Mammary epithelial cell (primary cell): ENCODE measurements at regions of chr14 and their contacts with region 1.

Region 1: DNA sequence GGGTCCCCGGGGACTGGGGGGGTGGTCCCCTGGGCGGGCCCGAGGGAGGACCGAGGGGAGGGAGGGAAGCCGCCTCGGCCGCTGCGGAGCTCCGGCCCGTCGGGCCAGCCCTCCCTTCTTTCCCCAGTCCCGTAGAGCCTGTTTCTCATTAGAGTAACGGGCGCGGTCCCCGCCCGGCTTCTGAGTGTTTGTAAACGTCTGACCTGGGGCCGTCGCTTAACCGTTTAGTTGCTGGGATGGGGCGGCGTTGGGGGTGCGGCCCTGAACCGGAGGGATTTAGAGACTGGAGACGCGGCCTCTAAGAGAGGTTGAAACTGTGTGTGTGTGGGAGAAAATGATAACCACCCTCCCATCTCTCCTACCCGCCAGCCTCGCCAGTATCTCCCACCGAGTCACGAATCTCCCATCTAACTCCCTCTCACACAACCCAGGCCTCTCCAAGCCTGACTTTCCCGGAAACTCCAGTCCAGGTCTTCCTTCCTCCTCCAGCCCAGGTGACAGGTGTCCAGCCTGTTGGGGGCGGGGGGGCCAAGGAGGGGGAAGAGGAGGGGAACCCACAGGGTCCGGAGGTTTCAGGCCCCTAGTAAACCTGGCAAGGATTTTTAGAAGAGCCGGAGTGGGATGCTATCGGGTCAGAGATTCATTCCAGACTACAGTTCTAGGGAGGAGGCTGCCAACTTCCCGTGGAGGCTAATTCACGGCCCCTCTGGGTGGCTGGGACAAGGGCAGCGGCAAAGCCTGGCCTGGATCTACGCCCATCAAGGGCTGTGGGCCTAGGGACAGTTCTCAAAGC is 1.1 kb upstream of the NFATC4 start:
- DNase-seq: peak; percentile 75
- H3K4me3 ChIP-seq: peak overlapping the region; percentile 45 to 56 (median 46)
- H3K27ac ChIP-seq: no peak overlapping the region
- H3K4me1 ChIP-seq: peaks cover 27% of the 10 kb centered on the region
- H3K27me3 ChIP-seq: no peaks in the 10 kb centered on the region
- CTCF ChIP-seq: no peak

Region 2: GRCh38 chr14:24289649-24290249 is 77.2 kb before region 1 on chr14:
- CTCF ChIA-PET with region 1: no interaction called
- dilution Hi-C with region 1: no loop called
- in situ Hi-C with region 1: no loop called
- intact Hi-C with region 1: no loop called
- DNase-seq: no peak
- H3K4me3 ChIP-seq: no peak overlapping the region
- H3K27ac ChIP-seq: no peak overlapping the region
- H3K4me1 ChIP-seq: peaks cover 14% of the 10 kb centered on the region
- H3K27me3 ChIP-seq: no peaks in the 10 kb centered on the region
- CTCF ChIP-seq: no peak

Region 3: DNA sequence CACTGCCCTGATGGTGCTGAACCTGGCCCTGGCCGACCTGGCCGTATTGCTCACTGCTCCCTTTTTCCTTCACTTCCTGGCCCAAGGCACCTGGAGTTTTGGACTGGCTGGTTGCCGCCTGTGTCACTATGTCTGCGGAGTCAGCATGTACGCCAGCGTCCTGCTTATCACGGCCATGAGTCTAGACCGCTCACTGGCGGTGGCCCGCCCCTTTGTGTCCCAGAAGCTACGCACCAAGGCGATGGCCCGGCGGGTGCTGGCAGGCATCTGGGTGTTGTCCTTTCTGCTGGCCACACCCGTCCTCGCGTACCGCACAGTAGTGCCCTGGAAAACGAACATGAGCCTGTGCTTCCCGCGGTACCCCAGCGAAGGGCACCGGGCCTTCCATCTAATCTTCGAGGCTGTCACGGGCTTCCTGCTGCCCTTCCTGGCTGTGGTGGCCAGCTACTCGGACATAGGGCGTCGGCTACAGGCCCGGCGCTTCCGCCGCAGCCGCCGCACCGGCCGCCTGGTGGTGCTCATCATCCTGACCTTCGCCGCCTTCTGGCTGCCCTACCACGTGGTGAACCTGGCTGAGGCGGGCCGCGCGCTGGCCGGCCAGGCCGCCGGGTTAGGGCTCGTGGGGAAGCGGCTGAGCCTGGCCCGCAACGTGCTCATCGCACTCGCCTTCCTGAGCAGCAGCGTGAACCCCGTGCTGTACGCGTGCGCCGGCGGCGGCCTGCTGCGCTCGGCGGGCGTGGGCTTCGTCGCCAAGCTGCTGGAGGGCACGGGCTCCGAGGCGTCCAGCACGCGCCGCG is 50.9 kb before region 1 on chr14:
- CTCF ChIA-PET with region 1: no interaction called
- dilution Hi-C with region 1: no loop called
- in situ Hi-C with region 1: no loop called
- intact Hi-C with region 1: no loop called
- DNase-seq: no peak
- H3K4me3 ChIP-seq: no peak overlapping the region
- H3K27ac ChIP-seq: no peak overlapping the region
- H3K4me1 ChIP-seq: peaks cover 39% of the 10 kb centered on the region
- H3K27me3 ChIP-seq: no peaks in the 10 kb centered on the region
- CTCF ChIP-seq: no peak

Region 4: DNA sequence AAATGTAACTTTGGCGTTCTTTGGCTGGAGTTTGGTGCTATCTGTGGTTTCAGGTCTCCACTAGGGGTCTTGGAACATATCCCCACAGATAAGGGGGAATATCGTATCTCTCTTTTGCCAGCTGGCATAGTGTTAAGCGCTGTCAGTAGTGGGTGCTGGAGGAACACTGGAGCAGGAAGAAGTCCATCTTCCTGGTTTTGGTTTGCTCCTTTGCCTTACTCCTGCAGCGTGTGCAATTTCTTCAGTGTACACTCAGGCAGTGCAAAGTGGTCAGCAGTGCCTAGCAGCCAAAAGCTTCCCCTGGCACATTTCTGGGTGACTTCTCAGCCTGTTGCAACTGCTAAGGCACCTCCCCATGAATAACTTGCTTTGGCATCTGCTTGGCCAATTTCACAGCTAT is 15.4 kb before region 1 on chr14:
- CTCF ChIA-PET with region 1: no interaction called
- dilution Hi-C with region 1: no loop called
- in situ Hi-C with region 1: no loop called
- intact Hi-C with region 1: loop called (anchors 1 kb)
- DNase-seq: peak; percentile 43
- H3K4me3 ChIP-seq: no peak overlapping the region
- H3K27ac ChIP-seq: no peak overlapping the region
- H3K4me1 ChIP-seq: peaks cover 2% of the 10 kb centered on the region
- H3K27me3 ChIP-seq: no peaks in the 10 kb centered on the region
- CTCF ChIP-seq: no peak

Region 5: DNA sequence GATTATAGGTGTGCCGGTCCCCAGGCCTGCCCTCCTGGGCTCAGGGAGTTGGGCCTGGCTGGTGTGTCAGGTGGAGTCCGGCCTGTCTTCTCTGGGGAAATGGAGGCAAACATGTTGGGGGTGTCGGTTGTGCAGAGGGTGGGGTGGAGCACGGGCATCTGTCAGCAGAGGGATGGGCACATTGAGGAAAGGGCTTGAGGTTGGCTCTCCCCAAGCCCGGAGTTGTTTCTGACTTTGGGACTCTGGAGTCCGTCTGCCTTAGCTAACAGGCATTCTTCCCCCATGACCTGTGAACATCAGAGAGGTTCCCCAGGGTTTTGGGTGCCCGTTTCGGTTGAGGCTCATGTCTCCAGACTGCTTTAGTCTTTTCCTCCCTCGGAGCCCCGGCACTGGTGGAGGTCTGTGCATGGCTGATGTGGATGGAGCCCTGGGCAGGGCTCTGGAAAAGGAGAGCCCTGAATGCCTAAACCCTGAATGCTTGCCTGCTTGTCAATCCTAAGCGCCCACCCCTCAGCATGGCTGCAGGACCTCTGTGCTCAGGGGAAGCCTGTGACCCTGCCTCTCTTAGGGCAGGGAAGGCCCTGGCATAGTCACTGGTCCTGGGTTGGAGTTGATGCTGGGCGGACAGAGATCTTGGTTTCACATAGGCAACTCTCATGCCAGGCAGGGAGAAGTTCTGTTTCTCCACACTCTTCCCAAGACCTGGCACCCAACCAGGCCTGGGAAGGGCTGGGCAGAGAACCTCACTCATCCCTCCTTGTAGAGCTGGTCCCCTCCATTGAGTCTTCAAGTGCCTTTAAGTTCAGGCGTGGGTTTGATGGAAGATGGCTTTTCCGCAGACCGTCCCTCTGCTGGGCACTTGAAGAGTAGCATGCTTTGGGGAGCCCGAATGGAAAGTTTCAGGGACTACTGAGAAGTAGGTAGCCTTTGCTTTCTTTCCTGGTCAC is 44.8 kb after region 1 on chr14:
- CTCF ChIA-PET with region 1: no interaction called
- dilution Hi-C with region 1: no loop called
- in situ Hi-C with region 1: no loop called
- intact Hi-C with region 1: loop called (anchors 1 kb)
- DNase-seq: no peak
- H3K4me3 ChIP-seq: no peak overlapping the region
- H3K27ac ChIP-seq: no peak overlapping the region
- H3K4me1 ChIP-seq: no peaks in the 10 kb centered on the region
- H3K27me3 ChIP-seq: no peaks in the 10 kb centered on the region
- CTCF ChIP-seq: peak; percentile 65 to 74